Tibial artery (tissue), 4 donors: ENCODE measurements at regions of chr1 and their contacts with region 1.

Region 1: GRCh38 chr1:2474933-2475371 is 1.1 kb upstream of the PLCH2 start:
- DNase-seq: no peak
- H3K4me3 ChIP-seq: no peak overlapping the region
- H3K27ac ChIP-seq: no peak overlapping the region
- H3K4me1 ChIP-seq: peaks cover 0 to 17% (median 0%) of the 10 kb centered on the region in 4 donors
- H3K27me3 ChIP-seq: peaks cover 0 to 90% of the 10 kb centered on the region in 2 donors
- CTCF ChIP-seq: no peak

Region 2: DNA sequence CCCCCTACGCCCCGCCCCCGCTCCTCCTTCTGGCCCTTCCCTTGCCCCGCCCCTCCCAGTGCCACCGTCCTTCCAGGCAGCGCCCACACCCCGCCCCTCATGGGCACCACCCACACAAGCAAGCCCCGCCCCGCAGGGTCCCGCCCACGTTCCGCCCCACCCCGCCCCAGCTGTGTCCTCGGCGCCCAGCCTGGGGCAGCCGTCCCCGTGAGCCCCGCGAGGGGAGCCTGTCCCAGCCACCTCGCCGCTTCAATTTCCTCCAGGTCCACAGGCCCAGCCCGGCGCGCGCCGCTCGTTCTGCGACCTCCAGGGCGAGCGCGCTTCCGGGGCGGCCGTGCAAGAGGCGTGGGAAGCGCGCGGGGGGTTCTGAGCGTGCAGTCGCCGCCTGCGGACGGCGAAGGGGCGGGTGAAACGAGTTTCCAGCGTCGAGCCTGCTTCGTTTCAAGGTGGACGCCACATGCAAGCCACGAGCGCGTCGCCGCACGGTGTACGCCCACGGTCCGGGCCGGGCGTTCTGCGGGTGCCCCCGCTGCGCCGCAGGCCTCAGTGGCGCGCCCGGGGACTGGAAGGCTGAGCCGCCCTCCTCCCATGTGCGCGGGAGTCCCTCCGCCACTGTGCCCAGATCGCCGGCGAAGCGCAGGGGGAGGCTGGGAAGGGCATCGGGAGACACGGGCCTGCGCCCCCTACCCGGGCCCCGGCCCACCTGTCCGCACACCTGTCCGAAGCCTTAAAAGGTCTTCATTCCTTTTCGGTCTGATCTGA is 269.6 kb before region 1 on chr1:
- intact Hi-C with region 1: no loop called
- DNase-seq: peak; percentile 97 to 98
- H3K4me3 ChIP-seq: peak overlapping the region; percentile 51 to 60
- H3K27ac ChIP-seq: peak overlapping the region; percentile 95 to 97
- H3K4me1 ChIP-seq: peaks cover 19 to 73% (median 66%) of the 10 kb centered on the region in 4 donors
- H3K27me3 ChIP-seq: no peaks in the 10 kb centered on the region
- CTCF ChIP-seq: peak in 1 of 2 experiments; percentile 34

Region 3: GRCh38 chr1:3247521-3248121 is 772.7 kb after region 1 on chr1:
- intact Hi-C with region 1: loop called (anchors 10 kb)
- DNase-seq: no peak
- H3K4me3 ChIP-seq: peak overlapping the region in 1 of 2 donors; percentile 7
- H3K27ac ChIP-seq: peak overlapping the region in 1 of 2 donors; percentile 8
- H3K4me1 ChIP-seq: peaks cover 0 to 33% (median 12%) of the 10 kb centered on the region in 4 donors
- H3K27me3 ChIP-seq: no peaks in the 10 kb centered on the region
- CTCF ChIP-seq: no peak